ENCODE measurements at regions of chr2 and their contacts with region 1.

Region 1: GRCh38 chr2:167440382-167440781 is 552.1 kb downstream of the XIRP2 start:
- DNase-seq: no peak
- ATAC-seq: no peak
- H3K4me3 Mint-ChIP-seq: no peak overlapping the region
- H3K27ac Mint-ChIP-seq: no peak overlapping the region
- H3K4me1 Mint-ChIP-seq: no peaks in the 10 kb centered on the region
- H3K27me3 Mint-ChIP-seq: no peaks in the 10 kb centered on the region
- CTCF ChIP-seq: no peak

Region 2: DNA sequence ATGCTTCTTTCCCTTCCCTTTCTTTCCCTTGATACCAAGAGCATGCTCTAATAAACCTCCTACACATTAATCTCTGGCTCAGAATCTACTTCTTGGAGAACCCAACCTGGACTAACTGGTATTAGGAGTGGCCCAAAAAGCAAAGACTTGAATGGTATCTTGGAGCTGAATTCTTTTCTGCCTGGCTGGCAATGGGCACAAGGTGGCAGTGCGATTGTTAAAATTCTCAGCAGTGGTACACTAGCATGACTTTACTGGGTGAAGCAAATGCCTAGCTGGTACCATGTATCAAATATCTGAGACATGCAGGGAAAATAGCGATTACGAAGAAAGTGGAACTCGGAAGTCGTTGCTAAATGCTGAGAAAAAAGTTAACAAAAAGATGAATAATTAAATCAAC is 176.0 kb before region 1 on chr2:
- CTCF ChIA-PET with region 1: no interaction called
- POLR2A ChIA-PET with region 1: no interaction called
- intact Hi-C with region 1: no loop called
- DNase-seq: peak; percentile 9
- ATAC-seq: no peak
- H3K4me3 Mint-ChIP-seq: no peak overlapping the region
- H3K27ac Mint-ChIP-seq: no peak overlapping the region
- H3K4me1 Mint-ChIP-seq: no peaks in the 10 kb centered on the region
- H3K27me3 Mint-ChIP-seq: no peaks in the 10 kb centered on the region
- CTCF ChIP-seq: no peak

Region 3: DNA sequence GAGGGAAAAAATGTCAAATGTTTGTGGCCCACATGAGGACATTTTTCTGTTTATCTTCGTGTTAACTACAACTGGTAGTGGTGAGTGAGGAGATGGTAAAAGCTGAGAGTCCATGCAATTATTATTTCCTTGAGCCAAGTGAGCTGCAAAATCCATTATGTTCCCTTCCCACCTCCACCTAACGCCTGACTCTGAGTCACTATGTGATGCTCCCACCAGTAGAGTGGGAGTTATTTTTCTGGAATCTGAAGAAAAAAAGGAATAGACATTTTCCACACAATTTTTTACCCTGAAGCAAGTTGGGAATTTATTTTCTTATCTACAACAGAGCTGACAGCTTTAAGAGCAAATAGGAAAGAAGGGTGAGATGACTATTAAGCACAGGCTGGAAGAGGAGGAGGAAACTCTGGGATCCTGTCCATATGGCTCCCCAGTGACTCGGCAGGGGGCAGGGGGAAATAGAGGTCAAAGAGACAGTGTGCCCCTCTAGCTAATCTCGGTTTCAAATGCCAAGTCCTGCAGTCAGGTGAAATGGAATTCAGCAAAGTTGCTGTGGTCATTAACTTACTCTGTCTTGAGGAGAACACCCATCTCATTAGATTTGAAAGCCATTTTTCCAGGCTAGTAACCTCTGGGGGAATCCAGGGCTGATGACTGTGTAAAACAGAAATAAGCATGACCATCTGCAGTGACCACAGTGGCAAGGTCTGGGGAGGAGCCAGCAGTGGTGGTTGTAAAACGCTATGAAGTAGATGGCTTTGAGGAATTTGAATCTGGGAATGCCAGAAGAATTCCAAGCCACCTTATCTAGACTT is 343.1 kb after region 1 on chr2:
- CTCF ChIA-PET with region 1: no interaction called
- POLR2A ChIA-PET with region 1: no interaction called
- intact Hi-C with region 1: loop called (anchors 5 kb)
- DNase-seq: no peak
- ATAC-seq: no peak
- H3K4me3 Mint-ChIP-seq: no peak overlapping the region
- H3K27ac Mint-ChIP-seq: no peak overlapping the region
- H3K4me1 Mint-ChIP-seq: no peaks in the 10 kb centered on the region
- H3K27me3 Mint-ChIP-seq: no peaks in the 10 kb centered on the region
- CTCF ChIP-seq: no peak

Measured in activated CD8-positive, alpha-beta T cell treated with anti-CD3 and anti-CD28 coated beads for 36 hours (primary cell).